ENCODE measurements at regions of chr14 and their contacts with region 1.

Region 1: DNA sequence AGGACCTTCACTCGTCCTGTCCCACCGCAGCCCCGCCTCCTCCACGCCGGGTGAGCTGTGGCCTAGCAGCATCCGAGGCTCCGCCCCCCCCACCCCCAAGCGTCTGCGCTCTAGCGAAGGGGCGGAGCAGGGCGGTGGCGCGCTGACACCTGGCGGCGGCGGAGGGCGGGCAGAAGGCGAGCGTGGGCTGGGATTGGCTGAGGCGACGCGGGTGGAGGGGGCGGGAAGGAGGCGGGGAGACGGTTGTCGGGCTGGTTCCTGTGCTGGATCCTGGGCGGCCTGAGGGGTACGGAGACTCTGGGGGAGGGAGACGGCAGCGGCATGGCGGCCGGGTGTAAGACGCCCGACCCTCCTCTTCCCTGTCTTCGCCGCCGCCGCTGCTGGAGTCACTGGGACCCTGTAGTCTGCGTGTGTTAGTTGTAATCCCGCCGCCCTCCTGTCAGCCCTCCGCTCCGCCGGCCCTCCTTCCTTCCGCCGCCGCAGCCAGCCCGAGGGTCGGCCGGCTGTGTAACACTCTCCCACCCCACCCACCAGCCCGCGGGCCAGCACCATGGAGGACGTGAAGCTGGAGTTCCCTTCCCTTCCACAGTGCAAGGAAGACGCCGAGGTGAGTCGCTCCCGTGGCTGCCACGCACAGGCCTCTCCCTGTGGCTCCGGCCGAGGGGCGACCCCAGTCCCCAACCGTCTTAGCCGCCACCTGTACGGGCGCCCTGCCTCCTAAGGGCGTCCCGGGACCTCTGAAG is at the start of gene STYX:
- DNase-seq: peak; percentile 89 to 98 (median 96)
- ATAC-seq: peak; percentile 92 to 93
- H3K4me3 Mint-ChIP-seq: peak within 1 kb of the TSS; percentile 90 to 97 (median 93)
- H3K27ac Mint-ChIP-seq: peak within 1 kb of the TSS; percentile 86 to 97 (median 93)
- H3K4me1 Mint-ChIP-seq: peaks cover 11 to 51% (median 26%) of the 10 kb centered on the region in 4 donors
- H3K27me3 Mint-ChIP-seq: no peaks in the 10 kb centered on the region
- polyA plus RNA-seq, gene STYX: 22.9 to 30.5 (median 25.6) TPM

Region 2: DNA sequence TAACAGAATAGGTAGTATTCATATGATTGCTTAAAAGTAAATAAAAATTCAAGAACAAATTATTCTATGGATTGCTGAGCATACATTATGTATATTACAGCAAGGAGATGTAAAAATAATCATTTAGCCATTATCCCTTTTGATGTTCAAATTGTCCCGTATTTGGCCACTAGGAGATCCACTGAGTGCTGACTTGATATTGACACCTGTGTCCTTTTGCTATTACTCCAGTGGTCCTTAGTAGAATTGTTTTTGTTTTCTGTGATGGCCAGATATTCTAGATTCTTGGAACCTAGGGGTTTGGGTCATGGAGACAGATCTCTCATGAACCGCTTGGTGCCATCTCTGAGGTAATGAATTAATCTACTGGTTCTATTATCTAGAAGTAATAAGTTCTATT is 51.5 kb before region 1 on chr14:
- POLR2A ChIA-PET with region 1: no interaction called
- DNase-seq: peak in 1 of 10 donors; percentile 26
- ATAC-seq: peak; percentile 62 to 72
- H3K4me3 Mint-ChIP-seq: no peak overlapping the region
- H3K27ac Mint-ChIP-seq: peak overlapping the region in 1 of 10 donors; percentile 26
- H3K4me1 Mint-ChIP-seq: peaks cover 0 to 9% (median 3%) of the 10 kb centered on the region in 4 donors
- H3K27me3 Mint-ChIP-seq: no peaks in the 10 kb centered on the region

Region 3: GRCh38 chr14:52755607-52756253 is 25.6 kb after region 1 on chr14:
- POLR2A ChIA-PET with region 1: interaction called, 10 read pairs
- DNase-seq: no peak
- ATAC-seq: no peak
- H3K4me3 Mint-ChIP-seq: no peak overlapping the region
- H3K27ac Mint-ChIP-seq: no peak overlapping the region
- H3K4me1 Mint-ChIP-seq: peaks cover 0 to 1% (median 0%) of the 10 kb centered on the region in 4 donors
- H3K27me3 Mint-ChIP-seq: no peaks in the 10 kb centered on the region

Region 4: DNA sequence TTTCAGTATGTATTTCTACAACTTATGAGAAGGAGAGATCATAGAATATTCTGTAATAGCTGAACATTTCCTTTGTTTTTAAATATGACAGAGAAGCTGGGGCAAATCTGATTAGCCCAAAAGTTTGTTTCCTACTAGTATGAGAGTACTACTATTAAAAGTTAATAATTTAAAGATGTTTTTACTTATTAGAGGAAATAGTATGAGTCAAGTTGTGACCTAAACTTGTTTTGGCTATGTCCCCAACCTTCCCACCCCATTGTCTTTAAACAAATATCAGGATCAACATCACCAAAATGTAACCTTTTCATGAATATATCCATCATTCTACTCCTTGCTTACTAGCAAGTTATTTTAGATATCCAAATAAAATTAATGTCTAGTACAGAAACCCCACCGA is 50.8 kb after region 1 on chr14:
- POLR2A ChIA-PET with region 1: no interaction called
- DNase-seq: no peak
- ATAC-seq: no peak
- H3K4me3 Mint-ChIP-seq: no peak overlapping the region
- H3K27ac Mint-ChIP-seq: peak overlapping the region in 6 of 10 donors; percentile 6 to 73 (median 56)
- H3K4me1 Mint-ChIP-seq: no peaks in the 10 kb centered on the region
- H3K27me3 Mint-ChIP-seq: no peaks in the 10 kb centered on the region

Region 5: DNA sequence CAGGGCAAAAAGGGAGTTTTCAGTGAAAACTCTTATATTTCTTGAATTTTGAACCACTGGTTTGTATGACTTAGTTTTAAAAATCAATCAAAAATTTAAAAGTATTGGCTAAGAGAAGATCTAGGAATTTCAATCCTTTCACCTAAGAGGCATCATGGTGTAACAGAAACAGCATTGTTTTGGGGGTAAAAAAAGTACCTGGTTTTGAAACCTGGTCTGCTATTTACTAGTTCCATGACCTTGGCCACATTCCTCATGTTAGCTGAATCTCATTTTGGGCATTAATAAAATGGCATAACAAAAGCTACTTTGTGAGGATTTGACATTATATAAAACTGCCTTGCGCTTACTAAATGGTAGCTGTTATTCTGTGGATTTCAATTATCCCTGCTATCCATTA is 78.0 kb after region 1 on chr14:
- POLR2A ChIA-PET with region 1: no interaction called
- DNase-seq: no peak
- ATAC-seq: no peak
- H3K4me3 Mint-ChIP-seq: no peak overlapping the region
- H3K27ac Mint-ChIP-seq: no peak overlapping the region
- H3K4me1 Mint-ChIP-seq: peaks cover 0 to 1% (median 0%) of the 10 kb centered on the region in 4 donors
- H3K27me3 Mint-ChIP-seq: no peaks in the 10 kb centered on the region

Region 6: GRCh38 chr14:52824507-52824906 is 94.4 kb after region 1 on chr14:
- POLR2A ChIA-PET with region 1: no interaction called
- DNase-seq: no peak
- ATAC-seq: no peak
- H3K4me3 Mint-ChIP-seq: no peak overlapping the region
- H3K27ac Mint-ChIP-seq: no peak overlapping the region
- H3K4me1 Mint-ChIP-seq: peaks cover 0 to under 1% (median 0%) of the 10 kb centered on the region in 4 donors
- H3K27me3 Mint-ChIP-seq: peaks cover 0 to 4% (median 2%) of the 10 kb centered on the region in 5 donors

Measured in naive thymus-derived CD8-positive, alpha-beta T cell (primary cell).